Activated T-helper 1 cell treated with anti-CD3 and anti-CD28 coated beads, Interleukin-12 subunit alpha, Interleukin-12 subunit beta, Interleukin-2, Interleukin-4 antibody, amounts not matched to agents 30 ng/mL and 10 ng/mL and 1 ng/mL, durations not matched to agents 14 hours and 24 hours and 36 hours (primary cell): ENCODE measurements at regions of chr9 and their contacts with region 1.

Region 1: DNA sequence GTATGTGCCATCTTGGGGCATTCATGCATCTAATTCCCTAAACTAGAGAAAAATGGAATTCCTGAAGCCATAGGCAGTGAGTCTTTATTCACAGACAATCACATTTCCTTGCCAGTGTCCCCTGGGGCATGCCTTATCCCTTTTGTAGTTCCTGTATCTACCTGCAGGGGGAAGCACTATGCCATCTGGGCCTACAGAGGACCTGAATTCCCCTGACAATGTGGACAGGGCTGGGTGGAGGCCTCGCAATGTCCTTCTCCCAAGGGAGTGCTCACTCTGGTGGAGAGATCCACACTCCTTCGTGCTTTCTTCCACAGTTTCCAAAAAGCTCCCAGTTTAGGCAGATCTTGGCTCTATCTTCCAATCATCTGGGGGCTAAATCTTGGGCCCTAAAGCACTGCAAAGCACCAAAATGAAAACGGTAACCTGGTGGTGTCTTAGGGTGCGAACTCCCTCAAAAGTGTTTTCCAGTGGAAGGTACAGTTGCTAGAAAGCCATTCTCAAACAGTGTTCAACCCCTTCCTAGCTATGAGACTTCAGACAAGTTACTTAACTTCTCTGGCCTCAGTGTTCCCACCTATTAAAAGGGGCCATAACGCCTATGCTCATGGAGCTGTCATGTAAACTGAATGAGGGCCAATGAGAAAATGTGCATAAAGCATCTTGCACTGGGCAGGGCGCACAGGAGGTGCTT is 17.5 kb downstream of the WHRN start:
- DNase-seq: peak; percentile 55
- H3K4me3 Mint-ChIP-seq: no peak overlapping the region
- H3K27ac Mint-ChIP-seq: peak overlapping the region; percentile 20
- H3K4me1 Mint-ChIP-seq: peaks cover 29% of the 10 kb centered on the region
- H3K27me3 Mint-ChIP-seq: no peaks in the 10 kb centered on the region

Region 2: DNA sequence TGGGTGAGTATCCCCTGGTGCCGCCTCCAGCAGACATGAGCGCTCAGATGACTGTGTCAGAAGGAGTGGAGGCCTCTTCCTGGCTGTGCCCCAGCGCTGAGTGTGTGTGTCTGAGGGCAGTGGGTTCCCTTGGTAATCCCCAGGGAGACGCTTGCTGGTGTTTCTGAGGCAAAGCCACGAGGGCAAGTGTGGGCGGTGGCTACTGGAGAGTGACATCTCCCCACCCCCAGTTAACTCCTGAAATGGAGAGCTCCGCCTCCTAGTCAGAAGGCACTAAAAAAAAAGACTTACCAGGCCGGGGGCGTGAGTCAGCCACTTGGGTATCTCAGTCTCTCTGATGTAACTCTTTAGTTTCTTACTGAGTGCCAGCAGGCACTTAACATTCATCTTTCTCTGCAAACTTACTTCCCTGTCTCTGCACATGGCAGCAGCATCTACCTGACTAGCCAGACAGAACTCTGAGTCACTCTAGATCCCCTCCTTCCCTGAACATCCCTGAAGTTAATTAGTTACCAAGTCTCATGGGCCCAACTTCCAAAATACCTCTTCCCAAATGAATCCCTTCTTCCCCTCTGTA is 138.8 kb before region 1 on chr9:
- intact Hi-C with region 1: loop called (anchors 1 kb)
- DNase-seq: peak; percentile 62
- H3K4me3 Mint-ChIP-seq: peak overlapping the region; percentile 72
- H3K27ac Mint-ChIP-seq: peak overlapping the region; percentile 97
- H3K4me1 Mint-ChIP-seq: peaks cover 56% of the 10 kb centered on the region
- H3K27me3 Mint-ChIP-seq: no peaks in the 10 kb centered on the region

Region 3: GRCh38 chr9:114472765-114473446 is 14.8 kb before region 1 on chr9:
- intact Hi-C with region 1: no loop called
- DNase-seq: no peak
- H3K4me3 Mint-ChIP-seq: no peak overlapping the region
- H3K27ac Mint-ChIP-seq: no peak overlapping the region
- H3K4me1 Mint-ChIP-seq: peaks cover 7% of the 10 kb centered on the region
- H3K27me3 Mint-ChIP-seq: no peaks in the 10 kb centered on the region

Region 4: GRCh38 chr9:114505187-114506081 is 17.7 kb after region 1 on chr9 and contains the start of gene WHRN:
- intact Hi-C with region 1: loop called (anchors 1 kb)
- DNase-seq: peak; percentile 89
- H3K4me3 Mint-ChIP-seq: peak within 1 kb of the TSS; percentile 85
- H3K27ac Mint-ChIP-seq: peak within 1 kb of the TSS; percentile 79
- H3K4me1 Mint-ChIP-seq: peaks cover 19% of the 10 kb centered on the region
- H3K27me3 Mint-ChIP-seq: peaks cover 62% of the 10 kb centered on the region
- total RNA-seq, gene WHRN: 2.2 and 2.4 TPM in 2 replicates

Region 5: GRCh38 chr9:114653556-114654159 is 165.9 kb after region 1 on chr9:
- intact Hi-C with region 1: loop called (anchors 1 kb)
- DNase-seq: peak; percentile 76
- H3K4me3 Mint-ChIP-seq: no peak overlapping the region
- H3K27ac Mint-ChIP-seq: peak overlapping the region; percentile 54
- H3K4me1 Mint-ChIP-seq: peaks cover 21% of the 10 kb centered on the region
- H3K27me3 Mint-ChIP-seq: no peaks in the 10 kb centered on the region

Region 6: GRCh38 chr9:115042781-115043509 is 555.2 kb after region 1 on chr9:
- intact Hi-C with region 1: loop called (anchors 10 kb)
- DNase-seq: peak; percentile 7
- H3K4me3 Mint-ChIP-seq: peak overlapping the region; percentile 1
- H3K27ac Mint-ChIP-seq: peak overlapping the region; percentile 78
- H3K4me1 Mint-ChIP-seq: peaks cover 47% of the 10 kb centered on the region
- H3K27me3 Mint-ChIP-seq: peaks cover 17% of the 10 kb centered on the region